Right cardiac atrium (tissue), 5 donors: ENCODE measurements at regions of chr7 and their contacts with region 1.

Region 1: GRCh38 chr7:120805636-120806388 is 52.1 kb downstream of the TSPAN12 start:
- DNase-seq: peak in 1 of 3 donors; percentile 27
- ATAC-seq: peak; percentile 51 to 68
- H3K4me3 ChIP-seq: no peak overlapping the region
- H3K27ac ChIP-seq: no peak overlapping the region
- H3K4me1 ChIP-seq: peaks cover 2% of the 10 kb centered on the region
- H3K27me3 ChIP-seq: no peaks in the 10 kb centered on the region

Region 2: GRCh38 chr7:120064565-120064964 is 741.2 kb before region 1 on chr7:
- intact Hi-C with region 1: no loop called
- DNase-seq: no peak
- ATAC-seq: no peak
- H3K4me3 ChIP-seq: no peak overlapping the region
- H3K27ac ChIP-seq: no peak overlapping the region
- H3K4me1 ChIP-seq: no peaks in the 10 kb centered on the region
- H3K27me3 ChIP-seq: no peaks in the 10 kb centered on the region

Region 3: GRCh38 chr7:120857588-120858573 is 52.1 kb after region 1 on chr7 and contains the start of gene TSPAN12:
- intact Hi-C with region 1: loop called (anchors 5 to 10 kb)
- DNase-seq: peak; percentile 91 to 96 (median 96)
- ATAC-seq: peak; percentile 97
- H3K4me3 ChIP-seq: peak within 1 kb of the TSS; percentile 86
- H3K27ac ChIP-seq: peak within 1 kb of the TSS; percentile 87
- H3K4me1 ChIP-seq: no peaks in the 10 kb centered on the region
- H3K27me3 ChIP-seq: no peaks in the 10 kb centered on the region
- total RNA-seq, gene TSPAN12: 43.4 to 63.7 (median 59.9) TPM

Region 4: GRCh38 chr7:120927454-120928103 is 121.8 kb after region 1 on chr7:
- intact Hi-C with region 1: loop called in 1 of 4 experiments (anchors 10 kb)
- DNase-seq: no peak
- ATAC-seq: no peak
- H3K4me3 ChIP-seq: no peak overlapping the region
- H3K27ac ChIP-seq: no peak overlapping the region
- H3K4me1 ChIP-seq: no peaks in the 10 kb centered on the region
- H3K27me3 ChIP-seq: no peaks in the 10 kb centered on the region

Region 5: GRCh38 chr7:121107923-121108498 is 302.2 kb after region 1 on chr7:
- intact Hi-C with region 1: loop called in 1 of 4 experiments (anchors 10 kb)
- DNase-seq: no peak
- ATAC-seq: peak; percentile 80 to 81
- H3K4me3 ChIP-seq: no peak overlapping the region
- H3K27ac ChIP-seq: no peak overlapping the region
- H3K4me1 ChIP-seq: peaks cover 1% of the 10 kb centered on the region
- H3K27me3 ChIP-seq: no peaks in the 10 kb centered on the region